ENCODE measurements at regions of chr11 and their contacts with region 1.

Region 1: DNA sequence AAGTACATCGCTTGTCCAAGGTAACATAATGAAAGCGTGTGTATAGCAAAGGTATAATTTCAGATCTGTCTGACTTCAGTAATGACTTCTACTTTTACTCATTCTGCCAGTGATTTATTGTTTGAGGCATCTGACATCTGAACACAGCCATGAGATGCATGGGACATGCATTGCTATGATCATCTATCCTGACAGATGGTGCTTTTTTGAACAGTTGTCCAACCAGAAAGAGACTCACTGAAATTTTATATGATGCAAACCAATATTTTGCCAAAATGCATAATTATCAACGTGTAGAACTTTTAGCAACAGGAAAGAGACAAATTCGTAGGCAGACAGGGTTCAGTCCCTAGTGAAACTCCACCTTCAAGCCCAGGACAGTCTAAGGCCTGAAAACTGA is 19.6 kb downstream of the OR5M3 start:
- DNase-seq: no peak
- CTCF ChIP-seq: no peak

Region 2: GRCh38 chr11:56380120-56380519 is 73.4 kb before region 1 on chr11:
- CTCF ChIA-PET with region 1: no interaction called
- POLR2A ChIA-PET with region 1: no interaction called
- DNase-seq: no peak
- CTCF ChIP-seq: no peak

Region 3: GRCh38 chr11:56396047-56396446 is 57.5 kb before region 1 on chr11:
- CTCF ChIA-PET with region 1: no interaction called
- POLR2A ChIA-PET with region 1: interaction called, 17 read pairs
- DNase-seq: no peak
- CTCF ChIP-seq: no peak

Measured in GM10248 (cell line).